ENCODE measurements at regions of chr3 and their contacts with region 1.

Region 1: GRCh38 chr3:4834403-4834866 is 144.8 kb upstream of the BHLHE40 start:
- DNase-seq: peak; percentile 74
- H3K4me3 Mint-ChIP-seq: peak overlapping the region; percentile 74
- H3K27ac Mint-ChIP-seq: peak overlapping the region; percentile 96
- H3K4me1 Mint-ChIP-seq: peaks cover 80% of the 10 kb centered on the region
- H3K27me3 Mint-ChIP-seq: no peaks in the 10 kb centered on the region

Region 2: DNA sequence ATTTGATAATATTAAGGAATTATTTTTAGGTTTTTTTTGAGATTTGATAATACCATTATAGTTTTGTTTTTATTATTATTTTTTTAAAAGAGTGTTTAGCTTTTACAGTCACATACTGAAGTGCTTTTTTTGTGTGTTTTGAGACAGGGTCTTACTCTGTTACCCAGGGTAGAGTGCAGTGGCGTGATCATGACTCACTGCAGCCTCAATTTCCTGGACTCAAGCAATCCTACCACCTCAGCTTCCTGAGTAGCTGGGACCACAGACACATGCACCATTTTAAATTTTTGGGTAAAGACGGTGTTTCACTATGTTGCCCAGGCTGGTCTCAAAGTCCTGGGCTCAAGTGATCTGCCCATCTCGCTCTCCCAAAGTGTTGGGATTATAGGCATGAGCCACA is 440.4 kb before region 1 on chr3:
- intact Hi-C with region 1: loop called (anchors 10 kb)
- DNase-seq: no peak
- H3K4me3 Mint-ChIP-seq: no peak overlapping the region
- H3K27ac Mint-ChIP-seq: peak overlapping the region; percentile 76
- H3K4me1 Mint-ChIP-seq: peaks cover 51% of the 10 kb centered on the region
- H3K27me3 Mint-ChIP-seq: no peaks in the 10 kb centered on the region

Region 3: DNA sequence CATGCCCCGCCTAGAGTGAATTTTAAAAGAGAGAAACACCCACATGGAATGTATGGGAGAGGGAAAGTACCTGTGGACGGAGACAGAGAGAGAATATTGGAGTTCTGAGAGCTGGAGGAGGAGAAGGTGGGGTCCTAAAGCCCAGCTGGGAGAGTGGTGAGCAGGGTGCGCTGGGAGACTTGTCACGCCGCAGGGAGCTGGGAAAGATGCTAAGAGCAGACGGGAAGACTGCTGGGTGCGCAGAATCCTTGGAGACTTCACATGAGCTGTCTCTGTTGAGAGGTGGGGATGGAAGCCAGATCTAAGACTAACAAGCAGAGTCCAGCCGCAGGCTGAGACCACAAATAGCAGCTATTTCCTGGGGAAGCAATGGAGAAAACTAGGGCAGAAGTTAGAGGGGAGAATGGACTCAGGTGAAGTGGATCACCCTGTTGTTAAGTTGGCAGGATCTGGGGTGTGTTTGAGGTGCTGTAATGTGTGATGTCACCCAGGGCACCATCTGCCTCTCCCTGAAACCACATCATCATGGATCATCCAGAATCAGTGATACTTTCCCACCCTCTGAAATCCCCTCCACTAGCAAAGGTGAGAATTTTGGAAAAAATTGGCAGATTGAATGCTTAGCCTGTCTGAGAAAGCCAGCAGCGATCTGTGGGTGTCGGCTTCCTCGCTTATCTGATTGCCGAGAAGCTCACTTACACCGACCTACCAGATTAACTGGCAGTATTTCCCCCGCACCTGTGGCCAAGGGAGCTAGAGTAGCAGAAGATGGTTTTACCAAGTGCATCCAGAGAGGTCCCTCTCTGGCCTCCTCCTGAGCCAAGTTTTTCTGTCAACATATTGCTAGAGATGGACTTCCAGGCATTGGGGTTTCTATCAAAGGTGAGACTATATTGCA is 30.0 kb before region 1 on chr3:
- intact Hi-C with region 1: loop called (anchors 1 kb)
- DNase-seq: peak; percentile 31
- H3K4me3 Mint-ChIP-seq: peak overlapping the region; percentile 35
- H3K27ac Mint-ChIP-seq: peak overlapping the region; percentile 78
- H3K4me1 Mint-ChIP-seq: peaks cover 62% of the 10 kb centered on the region
- H3K27me3 Mint-ChIP-seq: no peaks in the 10 kb centered on the region

Region 4: GRCh38 chr3:4845882-4846281 is 11.4 kb after region 1 on chr3:
- intact Hi-C with region 1: loop called (anchors 1 kb)
- DNase-seq: no peak
- H3K4me3 Mint-ChIP-seq: no peak overlapping the region
- H3K27ac Mint-ChIP-seq: peak overlapping the region; percentile 82
- H3K4me1 Mint-ChIP-seq: peaks cover 90% of the 10 kb centered on the region
- H3K27me3 Mint-ChIP-seq: no peaks in the 10 kb centered on the region

Region 5: GRCh38 chr3:4888913-4889846 is 54.7 kb after region 1 on chr3:
- intact Hi-C with region 1: loop called (anchors 1 kb)
- DNase-seq: peak; percentile 34
- H3K4me3 Mint-ChIP-seq: peak overlapping the region; percentile 17
- H3K27ac Mint-ChIP-seq: peak overlapping the region; percentile 91
- H3K4me1 Mint-ChIP-seq: peaks cover 58% of the 10 kb centered on the region
- H3K27me3 Mint-ChIP-seq: no peaks in the 10 kb centered on the region